GM13977 (cell line): ENCODE measurements at regions of chr6 and their contacts with region 1.

Region 1: DNA sequence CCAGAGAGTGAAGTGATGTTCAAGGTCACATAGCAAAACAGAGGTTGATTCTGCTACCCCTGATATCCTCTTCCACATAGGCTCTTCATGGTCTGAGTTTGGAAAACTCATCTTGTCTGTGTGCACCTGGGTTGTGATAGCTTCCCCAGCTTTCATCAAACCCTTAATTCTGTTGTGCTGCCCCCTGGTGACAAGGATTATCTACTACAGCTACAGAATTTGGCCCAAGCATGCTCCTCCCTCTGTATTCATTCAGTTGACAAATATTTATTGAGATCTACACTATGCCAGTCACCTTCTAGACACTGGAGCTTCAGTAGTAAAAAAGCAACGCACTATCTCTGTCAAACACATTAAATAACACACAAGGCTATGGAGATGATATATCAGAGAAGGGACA is 50.4 kb downstream of the SMPDL3A start:
- DNase-seq: peak; percentile 71
- CTCF ChIP-seq: peak; percentile 66

Region 2: DNA sequence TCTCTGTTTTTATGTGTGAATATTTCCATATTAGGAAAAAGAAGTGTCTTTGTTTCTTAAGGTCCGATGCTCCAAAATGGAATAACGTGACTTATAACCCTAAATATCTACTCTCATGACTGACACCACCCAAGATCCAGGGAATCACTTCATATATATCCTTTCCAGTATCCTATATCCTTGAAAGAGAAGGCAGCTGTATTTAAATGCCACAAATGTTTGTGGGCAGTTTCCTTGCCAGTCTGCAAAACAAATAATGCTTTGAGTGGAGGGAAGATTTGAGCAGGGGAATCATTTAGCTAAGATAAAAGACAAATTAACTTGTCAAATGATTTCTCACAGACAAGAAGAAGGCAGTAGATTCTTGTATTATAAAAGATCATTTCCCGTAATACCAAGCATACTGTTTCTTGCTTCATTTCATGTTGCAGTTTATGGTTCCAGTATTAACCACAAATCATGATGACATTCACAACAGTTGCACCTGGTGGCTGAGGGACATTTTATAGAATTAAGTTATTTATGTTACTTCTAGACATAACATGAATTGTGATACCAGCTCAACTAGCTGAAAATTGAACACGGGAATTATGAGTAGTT is 89.9 kb before region 1 on chr6:
- in situ Hi-C with region 1: loop called (anchors 10 kb)
- DNase-seq: no peak
- CTCF ChIP-seq: no peak

Region 3: GRCh38 chr6:123333000-123333756 is 493.7 kb after region 1 on chr6:
- in situ Hi-C with region 1: no loop called
- DNase-seq: no peak
- CTCF ChIP-seq: no peak